Heart left ventricle (tissue), 16 donors: ENCODE measurements at regions of chr5 and their contacts with region 1.

Region 1: DNA sequence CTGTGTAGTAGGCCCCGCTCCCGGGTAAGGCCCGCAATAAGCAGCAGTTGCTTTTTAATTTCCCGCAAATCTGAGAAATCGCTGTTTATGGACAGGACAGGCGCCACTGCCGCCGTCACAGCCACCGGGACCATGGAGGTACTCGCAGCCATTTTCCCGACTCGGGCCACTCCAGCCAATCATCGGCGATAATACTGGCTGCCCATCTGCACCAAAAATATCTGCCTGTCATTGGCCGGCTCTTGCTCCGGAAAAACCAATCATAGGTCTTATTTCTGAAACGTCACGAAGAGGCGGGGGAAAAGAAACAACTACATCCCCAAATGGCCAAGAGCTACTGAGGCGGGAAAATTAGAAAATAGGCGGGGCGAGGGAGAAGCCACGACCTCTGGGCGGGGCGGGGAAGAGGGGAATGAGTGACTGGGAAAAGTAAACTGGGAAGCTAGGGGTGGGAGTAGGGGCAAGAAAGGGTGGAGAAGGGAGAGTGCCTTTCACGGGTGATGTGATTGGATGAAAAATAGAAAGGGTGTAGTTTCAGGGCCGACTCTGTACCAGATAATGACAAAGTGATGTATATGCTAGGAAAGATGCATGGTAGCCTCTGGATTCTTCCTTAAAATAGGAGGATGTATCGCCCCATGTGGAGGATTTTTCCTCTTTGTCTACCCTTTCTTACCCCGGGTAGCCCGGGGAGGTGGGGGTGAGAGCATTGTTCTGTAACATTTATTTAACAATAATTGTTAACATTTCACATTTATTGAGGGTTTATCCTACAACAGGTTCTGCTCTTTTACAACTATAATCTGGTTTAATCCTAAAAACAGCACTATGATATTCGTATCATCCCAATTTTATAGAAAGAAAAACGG is at the start of gene CDC23:
- DNase-seq: peak; percentile 89 to 94 (median 94)
- ATAC-seq: peak; percentile 96 to 99 (median 98)
- H3K4me3 ChIP-seq: peak within 1 kb of the TSS; percentile 67 to 97 (median 85)
- H3K27ac ChIP-seq: peak within 1 kb of the TSS; percentile 20 to 87 (median 76)
- H3K4me1 ChIP-seq: peaks cover 0 to 29% (median 15%) of the 10 kb centered on the region in 12 donors
- H3K27me3 ChIP-seq: no peaks in the 10 kb centered on the region
- CTCF ChIP-seq: no peak
- POLR2A ChIP-seq: peak; percentile 20 to 51
- total RNA-seq, gene CDC23: 11.9 to 25.6 (median 17.2) TPM

Region 2: DNA sequence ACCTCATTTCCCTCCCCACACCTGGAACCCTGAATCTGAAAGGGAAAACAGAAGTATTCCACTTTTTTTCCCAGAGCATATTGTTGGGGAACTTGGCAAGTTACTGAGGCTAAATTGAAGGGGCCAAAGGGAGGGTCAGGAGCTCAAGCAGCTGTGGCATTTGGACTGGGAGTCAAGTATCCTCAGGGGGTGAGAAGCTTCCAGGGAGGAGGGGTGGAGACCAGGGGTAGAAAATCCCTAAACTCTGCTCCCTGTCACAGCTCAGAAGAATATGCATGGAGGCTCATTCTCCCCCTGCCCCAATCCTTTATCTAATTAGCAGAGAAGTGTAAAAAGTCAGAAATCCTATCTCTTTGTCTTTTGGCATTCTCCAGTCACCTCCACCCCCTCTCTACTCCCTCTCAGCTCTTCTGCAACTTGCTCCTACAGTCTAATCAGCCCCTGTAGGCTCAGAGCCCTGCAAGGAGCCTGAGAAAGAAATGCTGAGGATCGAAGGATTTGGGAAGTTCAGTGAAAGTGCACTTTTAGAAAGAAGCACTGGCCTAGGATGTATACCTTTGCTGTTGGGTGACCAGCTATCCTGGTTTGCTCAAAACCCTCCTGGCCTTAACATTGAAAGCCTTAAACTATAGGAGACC is 135.3 kb before region 1 on chr5:
- intact Hi-C with region 1: no loop called
- DNase-seq: no peak
- ATAC-seq: no peak
- H3K4me3 ChIP-seq: no peak overlapping the region
- H3K27ac ChIP-seq: no peak overlapping the region
- H3K4me1 ChIP-seq: peaks cover 0 to 10% (median 0%) of the 10 kb centered on the region in 12 donors
- H3K27me3 ChIP-seq: no peaks in the 10 kb centered on the region
- CTCF ChIP-seq: no peak
- POLR2A ChIP-seq: no peak

Region 3: DNA sequence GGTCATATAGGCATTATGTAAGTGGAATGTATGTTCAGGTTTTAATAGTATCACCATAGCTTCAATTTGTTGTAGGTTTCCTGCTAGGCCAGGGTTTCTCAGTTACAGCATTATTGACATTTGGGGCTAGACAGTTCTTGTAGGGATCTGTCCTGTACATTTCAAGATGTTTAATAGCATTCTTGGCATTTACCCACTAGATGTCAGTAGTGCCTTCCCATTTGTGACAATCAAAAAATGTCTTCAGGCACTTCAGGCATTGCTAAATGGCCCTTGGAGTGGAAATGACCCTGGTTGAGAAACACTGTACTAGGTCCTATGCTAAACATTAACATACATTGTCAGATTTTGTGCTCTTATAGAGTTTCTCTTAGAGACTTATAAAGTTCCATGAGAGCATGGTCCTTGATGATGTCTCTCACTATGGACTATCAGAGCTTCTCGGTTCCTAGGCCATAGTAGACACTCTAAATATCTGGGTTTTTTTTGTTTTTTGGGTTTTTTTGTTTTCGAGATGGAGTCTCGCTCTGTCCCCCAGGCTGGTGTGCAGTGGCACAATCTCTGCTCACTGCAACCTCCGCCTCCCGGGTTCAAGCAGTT is 33.1 kb before region 1 on chr5:
- intact Hi-C with region 1: loop called in 1 of 10 experiments (anchors 2 kb)
- DNase-seq: no peak
- ATAC-seq: no peak
- H3K4me3 ChIP-seq: peak overlapping the region in 1 of 12 donors; percentile 90
- H3K27ac ChIP-seq: no peak overlapping the region
- H3K4me1 ChIP-seq: peaks cover 2 to 31% (median 19%) of the 10 kb centered on the region in 12 donors
- H3K27me3 ChIP-seq: no peaks in the 10 kb centered on the region
- CTCF ChIP-seq: peak in 4 of 12 donors; percentile 5 to 32 (median 18)
- POLR2A ChIP-seq: no peak

Region 4: DNA sequence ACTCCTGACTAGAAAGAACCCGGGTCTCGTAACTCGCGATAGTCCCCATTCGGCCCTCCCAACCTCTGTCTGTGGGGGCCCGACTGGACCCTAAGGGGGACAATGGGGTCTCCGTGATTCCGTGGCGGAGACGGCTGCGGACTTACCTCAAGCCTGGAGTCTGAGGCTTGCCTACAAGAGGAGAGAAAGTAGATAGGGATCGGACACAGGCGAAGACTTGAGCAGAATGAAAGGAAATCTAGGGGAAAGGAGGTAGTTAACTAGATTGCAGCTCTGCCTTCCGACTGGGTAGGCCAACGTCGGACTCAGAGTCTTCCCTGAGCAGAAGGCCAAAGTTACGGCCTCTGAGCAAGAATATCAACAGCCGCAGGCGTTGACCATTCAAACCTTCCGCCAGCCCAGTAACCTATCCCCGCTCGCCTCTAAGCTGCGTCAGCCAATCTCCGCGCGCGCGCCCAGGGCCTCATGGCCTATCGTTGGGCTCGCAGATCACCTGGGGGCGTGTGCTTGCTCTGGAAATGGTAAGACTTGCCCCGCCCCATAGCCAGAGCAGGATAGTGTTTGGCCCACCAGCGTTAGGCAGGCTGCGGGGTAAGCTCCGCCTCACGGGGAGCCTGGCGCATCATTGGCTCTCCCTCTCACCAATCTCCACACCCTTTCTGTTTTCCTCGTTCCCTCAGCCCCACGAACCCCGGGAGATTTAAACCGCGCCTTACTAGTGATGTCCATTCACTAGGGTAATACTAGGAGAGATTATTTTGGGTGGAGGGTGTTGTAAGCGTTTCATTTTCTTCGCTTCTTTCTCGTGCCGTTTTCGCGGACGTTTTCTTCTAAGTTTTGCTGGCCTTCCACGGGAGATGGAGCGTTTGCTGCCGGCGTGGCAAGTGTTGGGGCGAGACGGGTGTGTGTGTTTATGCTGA is 118.3 kb after region 1 on chr5 and contains the start of gene CDC25C:
- intact Hi-C with region 1: loop called in 1 of 10 experiments (anchors 5 kb)
- DNase-seq: peak; percentile 97 to 99 (median 98)
- ATAC-seq: peak; percentile 100
- H3K4me3 ChIP-seq: peak within 1 kb of the TSS; percentile 2 to 63 (median 48)
- H3K27ac ChIP-seq: peak within 1 kb of the TSS in 1 of 12 donors; percentile 26
- H3K4me1 ChIP-seq: peaks cover 0 to 16% (median 10%) of the 10 kb centered on the region in 12 donors
- H3K27me3 ChIP-seq: no peaks in the 10 kb centered on the region
- CTCF ChIP-seq: peak in 1 of 12 donors; percentile 6
- POLR2A ChIP-seq: peak in 1 of 2 donors; percentile 17
- total RNA-seq, gene CDC25C: 0.19 to 2.5 (median 0.58) TPM in 4 of 9 donors, not detected in the others